Activated CD8-positive, alpha-beta T cell treated with anti-CD3 and anti-CD28 coated beads for 36 hours (primary cell): ENCODE measurements at regions of chr13 and their contacts with region 1.

Region 1: DNA sequence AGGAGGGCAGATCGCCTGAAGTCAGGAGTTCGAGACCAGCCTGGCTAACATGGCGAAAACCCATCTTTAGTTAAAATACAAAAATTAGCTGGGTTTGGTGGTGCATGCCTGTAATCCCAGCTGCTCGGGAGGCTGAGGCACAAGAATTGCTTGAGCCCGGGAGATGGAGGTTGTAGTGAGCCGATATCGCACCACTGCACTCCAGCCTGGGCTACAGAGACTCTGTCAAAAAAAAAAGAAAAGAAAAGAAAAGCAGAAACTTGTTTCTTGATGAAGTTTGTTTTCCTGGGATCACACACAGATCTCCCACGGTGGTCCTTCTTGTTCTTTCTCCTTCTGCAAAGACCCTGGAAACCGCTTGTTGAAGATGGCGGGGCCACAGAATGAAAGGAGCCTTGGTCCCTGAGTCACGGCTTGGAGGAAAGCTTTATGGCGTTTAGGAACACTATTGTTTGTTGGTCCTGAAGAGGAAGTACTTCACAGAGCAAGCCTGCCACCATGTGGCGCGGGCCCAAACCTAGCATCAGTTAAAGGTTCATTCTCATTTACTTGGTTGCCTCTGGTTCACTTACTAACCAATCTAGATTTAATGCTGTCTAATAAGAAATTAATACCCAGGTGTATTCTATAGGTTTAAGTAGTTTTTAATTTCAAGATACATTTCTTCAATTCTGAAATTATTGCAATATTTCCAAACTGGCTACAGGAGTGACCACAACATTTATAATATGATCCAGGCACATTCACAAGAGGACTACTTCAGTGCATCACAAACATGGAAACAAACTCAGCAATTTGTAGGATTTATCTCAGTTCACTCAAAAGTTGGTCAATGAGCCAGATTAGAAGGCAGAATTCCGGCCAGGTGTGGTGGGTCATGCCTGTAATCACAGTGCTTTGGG is 21.3 kb upstream of the ARL11 start:
- DNase-seq: peak; percentile 91
- ATAC-seq: peak; percentile 99
- H3K4me3 Mint-ChIP-seq: peak overlapping the region; percentile 72
- H3K27ac Mint-ChIP-seq: peak overlapping the region; percentile 69
- H3K4me1 Mint-ChIP-seq: peaks cover 5% of the 10 kb centered on the region
- H3K27me3 Mint-ChIP-seq: no peaks in the 10 kb centered on the region
- CTCF ChIP-seq: peak; percentile 90

Region 2: DNA sequence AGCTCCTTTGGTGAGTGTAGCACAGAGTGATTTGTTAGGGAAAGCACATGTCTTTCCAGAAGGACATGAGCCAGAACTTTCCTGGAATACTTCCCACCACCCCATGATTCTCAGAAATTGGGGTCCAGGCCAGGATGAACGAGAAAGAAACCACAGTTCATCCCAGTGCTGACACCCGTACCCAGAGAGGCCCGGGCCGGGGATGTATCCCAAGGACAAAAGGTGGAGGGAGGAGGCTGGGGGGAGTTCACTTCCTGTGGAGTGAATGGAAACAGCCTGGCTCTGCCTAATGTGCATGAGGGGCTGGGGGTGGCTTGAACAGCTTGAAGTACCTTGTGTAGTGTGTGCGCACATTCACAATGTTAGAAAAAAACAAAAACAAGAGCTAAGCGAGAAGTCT is 311.8 kb before region 1 on chr13:
- CTCF ChIA-PET with region 1: interaction called, 28 read pairs
- POLR2A ChIA-PET with region 1: interaction called, 3 read pairs
- intact Hi-C with region 1: no loop called
- DNase-seq: no peak
- ATAC-seq: no peak
- H3K4me3 Mint-ChIP-seq: no peak overlapping the region
- H3K27ac Mint-ChIP-seq: no peak overlapping the region
- H3K4me1 Mint-ChIP-seq: peaks cover 9% of the 10 kb centered on the region
- H3K27me3 Mint-ChIP-seq: no peaks in the 10 kb centered on the region
- CTCF ChIP-seq: no peak

Region 3: GRCh38 chr13:49300739-49301589 is 306.0 kb before region 1 on chr13:
- CTCF ChIA-PET with region 1: interaction called, 28 read pairs
- POLR2A ChIA-PET with region 1: interaction called, 3 read pairs
- intact Hi-C with region 1: loop called (anchors 1 kb)
- DNase-seq: peak; percentile 77
- ATAC-seq: peak; percentile 97
- H3K4me3 Mint-ChIP-seq: peak overlapping the region; percentile 46
- H3K27ac Mint-ChIP-seq: peak overlapping the region; percentile 73
- H3K4me1 Mint-ChIP-seq: peaks cover 5% of the 10 kb centered on the region
- H3K27me3 Mint-ChIP-seq: no peaks in the 10 kb centered on the region
- CTCF ChIP-seq: peak; percentile 78

Region 4: DNA sequence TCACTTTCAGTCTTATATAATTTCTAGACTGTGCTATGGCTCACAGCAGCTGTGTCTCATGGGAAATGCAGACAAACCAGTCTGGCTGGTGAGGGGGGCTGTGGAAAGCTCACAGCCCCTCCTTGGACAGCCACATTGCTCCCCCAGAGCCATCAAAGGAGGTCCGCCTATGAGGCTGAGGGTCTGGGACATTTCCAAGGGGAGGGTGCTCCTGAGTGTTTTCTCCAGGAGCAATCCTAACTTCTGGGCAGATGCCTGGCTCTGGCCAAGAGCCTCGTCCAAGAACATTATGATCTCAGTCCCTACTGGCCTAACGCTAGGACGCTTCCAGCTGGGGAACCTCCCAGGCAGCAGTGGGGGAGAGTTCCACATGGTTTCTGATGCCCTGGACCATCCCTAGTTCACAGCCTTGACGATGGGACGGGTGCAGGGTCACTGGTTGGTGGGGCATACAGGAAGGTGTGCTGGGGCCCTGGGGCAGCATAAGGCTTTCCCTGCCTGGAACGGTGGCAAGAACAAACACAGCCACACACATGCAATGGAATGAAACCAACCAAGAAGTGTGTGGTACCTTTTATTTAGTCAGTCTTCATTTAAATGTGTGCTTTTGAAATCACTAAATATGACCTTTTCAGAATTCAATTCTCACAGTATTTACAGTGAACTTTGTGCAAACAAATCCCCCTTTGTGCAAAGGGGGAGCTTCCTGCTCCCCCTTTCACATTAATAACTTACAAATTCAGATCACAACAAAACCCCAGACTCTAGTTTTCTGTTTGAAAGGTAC is 298.7 kb before region 1 on chr13:
- CTCF ChIA-PET with region 1: interaction called, 11 read pairs
- POLR2A ChIA-PET with region 1: no interaction called
- intact Hi-C with region 1: no loop called
- DNase-seq: no peak
- ATAC-seq: no peak
- H3K4me3 Mint-ChIP-seq: no peak overlapping the region
- H3K27ac Mint-ChIP-seq: no peak overlapping the region
- H3K4me1 Mint-ChIP-seq: no peaks in the 10 kb centered on the region
- H3K27me3 Mint-ChIP-seq: no peaks in the 10 kb centered on the region
- CTCF ChIP-seq: no peak

Region 5: GRCh38 chr13:49421391-49421790 is 185.6 kb before region 1 on chr13:
- CTCF ChIA-PET with region 1: interaction called, 3 read pairs
- POLR2A ChIA-PET with region 1: no interaction called
- intact Hi-C with region 1: loop called (anchors 10 kb)
- DNase-seq: peak; percentile 40
- ATAC-seq: peak; percentile 79
- H3K4me3 Mint-ChIP-seq: no peak overlapping the region
- H3K27ac Mint-ChIP-seq: no peak overlapping the region
- H3K4me1 Mint-ChIP-seq: no peaks in the 10 kb centered on the region
- H3K27me3 Mint-ChIP-seq: no peaks in the 10 kb centered on the region
- CTCF ChIP-seq: no peak

Region 6: GRCh38 chr13:49495783-49496762 is 110.9 kb before region 1 on chr13 and contains the start of gene PHF11:
- CTCF ChIA-PET with region 1: interaction called, 3 read pairs
- POLR2A ChIA-PET with region 1: no interaction called
- intact Hi-C with region 1: loop called (anchors 10 kb)
- DNase-seq: peak; percentile 94
- ATAC-seq: peak; percentile 84
- H3K4me3 Mint-ChIP-seq: peak within 1 kb of the TSS; percentile 92
- H3K27ac Mint-ChIP-seq: peak within 1 kb of the TSS; percentile 98
- H3K4me1 Mint-ChIP-seq: peaks cover 46% of the 10 kb centered on the region
- H3K27me3 Mint-ChIP-seq: no peaks in the 10 kb centered on the region
- CTCF ChIP-seq: no peak
- total RNA-seq, gene PHF11: 59.3 to 62.6 TPM

Region 7: GRCh38 chr13:49716615-49717014 is 109.6 kb after region 1 on chr13:
- CTCF ChIA-PET with region 1: no interaction called
- POLR2A ChIA-PET with region 1: no interaction called
- intact Hi-C with region 1: no loop called
- DNase-seq: no peak
- ATAC-seq: no peak
- H3K4me3 Mint-ChIP-seq: no peak overlapping the region
- H3K27ac Mint-ChIP-seq: no peak overlapping the region
- H3K4me1 Mint-ChIP-seq: peaks cover 4% of the 10 kb centered on the region
- H3K27me3 Mint-ChIP-seq: no peaks in the 10 kb centered on the region
- CTCF ChIP-seq: no peak